Activated CD4-positive, alpha-beta T cell treated with anti-CD3 and anti-CD28 coated beads, Interleukin-2, amount 10 ng/mL, durations not matched to agents 24 days and 14 days (primary cell): ENCODE measurements at regions of chr2 and their contacts with region 1.

Region 1: GRCh38 chr2:30266051-30266621 is 34.8 kb downstream of the LBH start:
- DNase-seq: peak; percentile 86
- H3K4me3 Mint-ChIP-seq: peak overlapping the region; percentile 90
- H3K27ac Mint-ChIP-seq: peak overlapping the region; percentile 99
- H3K4me1 Mint-ChIP-seq: peaks cover 70% of the 10 kb centered on the region
- H3K27me3 Mint-ChIP-seq: no peaks in the 10 kb centered on the region

Region 2: DNA sequence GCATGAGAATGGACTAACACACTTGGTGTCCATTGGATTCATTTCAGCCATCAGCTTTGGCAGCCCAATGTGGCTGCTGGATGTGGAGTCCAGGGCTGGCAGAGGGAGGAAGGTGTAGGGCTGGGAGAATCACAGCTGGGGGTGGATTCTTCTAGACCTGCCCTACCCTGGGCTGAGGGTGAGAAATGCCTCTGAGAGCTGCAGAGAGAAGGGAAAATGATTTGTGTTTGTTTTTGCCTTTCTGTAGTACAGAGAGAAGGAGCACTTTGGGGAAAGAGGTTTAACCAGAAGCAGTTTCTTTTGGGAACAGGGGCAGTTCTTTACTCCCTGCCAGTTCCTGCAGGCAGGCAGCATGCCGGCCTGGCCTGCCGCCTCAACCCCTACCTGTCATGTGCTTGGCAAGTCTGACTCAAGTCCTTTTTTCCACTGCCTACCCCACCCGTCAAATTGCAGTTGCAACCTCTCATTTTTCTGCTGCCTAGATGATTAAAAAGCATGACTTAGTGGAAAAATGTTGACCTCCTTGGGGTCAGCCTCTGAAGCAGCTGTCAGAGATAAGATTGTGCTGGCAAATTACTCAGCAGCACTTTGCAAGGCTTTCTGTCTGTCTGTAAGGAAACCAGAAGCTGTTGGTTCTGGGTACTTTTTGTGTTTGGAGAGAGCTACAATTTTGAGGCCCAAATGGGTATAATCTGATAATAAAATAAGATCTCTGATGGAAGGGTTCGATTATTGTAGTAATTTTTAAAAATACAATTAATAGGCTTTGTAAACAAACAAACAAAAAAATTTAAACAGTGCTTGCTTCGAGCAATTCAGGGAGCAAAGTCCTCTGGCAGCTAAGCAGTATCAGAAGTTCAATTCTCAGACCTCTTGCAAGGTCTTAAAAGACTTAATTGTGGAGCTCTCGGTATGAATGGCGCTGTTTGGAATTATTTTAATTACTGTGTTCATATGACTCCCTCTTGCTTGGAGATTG is 13.1 kb before region 1 on chr2:
- intact Hi-C with region 1: loop called (anchors 1 kb)
- DNase-seq: peak; percentile 83
- H3K4me3 Mint-ChIP-seq: peak overlapping the region; percentile 53
- H3K27ac Mint-ChIP-seq: peak overlapping the region; percentile 94
- H3K4me1 Mint-ChIP-seq: peaks cover 72% of the 10 kb centered on the region
- H3K27me3 Mint-ChIP-seq: no peaks in the 10 kb centered on the region

Region 3: DNA sequence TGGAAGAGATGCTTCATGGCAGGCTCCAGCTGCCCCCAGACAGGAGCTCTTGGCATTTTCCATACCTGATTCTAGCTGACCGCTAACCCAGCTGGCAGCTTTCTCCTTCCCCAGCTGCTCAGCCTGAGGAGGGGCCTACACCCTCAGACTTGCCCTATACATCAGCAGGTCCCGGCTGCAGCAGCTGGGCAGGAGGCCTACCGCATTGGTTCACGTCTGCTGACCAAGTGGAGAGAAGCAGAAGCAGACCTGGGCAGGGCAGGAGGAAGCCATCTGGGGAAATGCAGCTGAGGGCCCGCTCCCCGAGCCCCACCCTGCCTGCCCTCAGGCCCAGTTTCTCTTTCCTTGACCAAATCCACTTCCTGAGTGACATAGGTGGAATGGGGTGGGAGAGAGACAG is 15.9 kb after region 1 on chr2:
- intact Hi-C with region 1: no loop called
- DNase-seq: no peak
- H3K4me3 Mint-ChIP-seq: no peak overlapping the region
- H3K27ac Mint-ChIP-seq: no peak overlapping the region
- H3K4me1 Mint-ChIP-seq: peaks cover 22% of the 10 kb centered on the region
- H3K27me3 Mint-ChIP-seq: no peaks in the 10 kb centered on the region

Region 4: GRCh38 chr2:30472326-30472725 is 206.2 kb after region 1 on chr2:
- intact Hi-C with region 1: loop called (anchors 1 kb)
- DNase-seq: no peak
- H3K4me3 Mint-ChIP-seq: no peak overlapping the region
- H3K27ac Mint-ChIP-seq: peak overlapping the region; percentile 14
- H3K4me1 Mint-ChIP-seq: peaks cover 18% of the 10 kb centered on the region
- H3K27me3 Mint-ChIP-seq: no peaks in the 10 kb centered on the region